Transverse colon (tissue), 4 donors: ENCODE measurements at regions of chr6 and their contacts with region 1.

Region 1: DNA sequence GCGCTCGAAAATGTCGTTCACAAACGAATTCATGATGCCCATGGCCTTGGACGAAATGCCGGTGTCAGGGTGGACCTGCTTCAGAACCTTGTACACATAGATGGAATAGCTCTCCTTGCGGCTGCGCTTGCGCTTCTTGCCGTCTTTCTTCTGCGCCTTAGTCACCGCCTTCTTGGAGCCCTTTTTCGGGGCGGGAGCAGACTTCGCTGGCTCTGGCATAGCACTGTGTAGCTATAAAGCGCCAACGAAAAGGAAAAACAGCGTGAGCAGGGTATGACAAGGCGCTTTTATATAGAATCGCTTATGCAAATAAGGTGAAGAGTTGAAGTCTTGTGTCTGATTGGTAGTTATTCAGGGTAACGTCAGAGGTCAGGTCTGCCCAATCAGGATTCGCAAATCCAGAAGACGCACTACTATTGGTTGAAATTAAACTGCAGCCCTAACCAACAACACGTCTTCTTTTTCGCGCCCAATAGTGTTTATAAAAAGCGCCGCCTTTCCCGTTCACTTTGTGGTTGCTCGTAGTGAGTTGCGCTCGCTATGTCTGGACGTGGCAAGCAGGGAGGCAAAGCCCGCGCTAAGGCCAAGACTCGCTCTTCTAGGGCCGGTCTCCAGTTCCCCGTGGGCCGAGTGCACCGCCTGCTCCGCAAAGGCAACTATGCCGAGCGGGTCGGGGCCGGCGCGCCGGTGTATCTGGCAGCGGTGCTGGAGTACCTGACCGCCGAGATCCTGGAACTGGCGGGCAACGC is 114.8 kb upstream of the PRSS16 start:
- DNase-seq: peak; percentile 94
- H3K4me3 ChIP-seq: peak overlapping the region; percentile 32 to 66 (median 50)
- H3K27ac ChIP-seq: peak overlapping the region; percentile 95 to 98 (median 97)
- H3K4me1 ChIP-seq: peaks cover 0 to 23% (median 17%) of the 10 kb centered on the region in 4 donors
- H3K27me3 ChIP-seq: no peaks in the 10 kb centered on the region
- CTCF ChIP-seq: no peak
- EP300 ChIP-seq: no peak
- POLR2A ChIP-seq: peak; percentile 99

Region 2: DNA sequence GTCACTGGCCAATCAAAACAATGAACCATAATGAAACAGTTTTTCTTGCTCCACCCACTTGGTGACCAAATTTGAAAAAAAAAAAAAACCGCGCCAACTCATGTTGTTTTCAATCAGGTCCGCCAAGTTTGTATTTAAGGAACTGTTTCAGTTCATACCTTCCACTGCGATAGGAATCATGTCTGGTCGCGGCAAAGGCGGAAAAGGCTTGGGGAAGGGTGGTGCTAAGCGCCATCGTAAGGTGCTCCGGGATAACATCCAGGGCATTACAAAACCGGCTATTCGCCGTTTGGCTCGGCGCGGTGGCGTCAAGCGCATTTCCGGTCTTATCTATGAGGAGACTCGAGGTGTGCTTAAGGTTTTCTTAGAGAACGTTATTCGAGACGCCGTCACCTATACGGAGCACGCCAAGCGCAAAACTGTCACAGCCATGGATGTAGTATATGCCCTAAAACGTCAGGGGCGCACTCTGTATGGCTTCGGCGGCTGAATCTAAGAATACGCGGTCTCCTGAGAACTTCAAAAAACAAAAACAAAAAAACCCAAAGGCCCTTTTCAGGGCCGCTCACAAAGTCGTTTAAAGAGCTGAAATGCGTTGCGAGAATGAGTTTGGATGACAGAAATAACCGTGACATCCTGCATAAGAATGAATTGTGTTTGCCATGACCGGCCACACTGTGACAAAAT is 1028.8 kb before region 1 on chr6:
- in situ Hi-C with region 1: loop called in 1 of 4 experiments (anchors 25 kb)
- intact Hi-C with region 1: no loop called
- DNase-seq: peak; percentile 92
- H3K4me3 ChIP-seq: peak overlapping the region; percentile 23 to 53 (median 32)
- H3K27ac ChIP-seq: peak overlapping the region; percentile 91 to 95 (median 93)
- H3K4me1 ChIP-seq: peaks cover 6 to 23% (median 13%) of the 10 kb centered on the region in 4 donors
- H3K27me3 ChIP-seq: no peaks in the 10 kb centered on the region
- CTCF ChIP-seq: peak; percentile 42 to 73 (median 54)
- EP300 ChIP-seq: peak; percentile 49
- POLR2A ChIP-seq: peak; percentile 100

Region 3: GRCh38 chr6:26196846-26197648 is 935.7 kb before region 1 on chr6:
- in situ Hi-C with region 1: loop called in 2 of 4 experiments (anchors 25 kb)
- intact Hi-C with region 1: no loop called
- DNase-seq: peak; percentile 84
- H3K4me3 ChIP-seq: peak overlapping the region; percentile 46 to 70 (median 62)
- H3K27ac ChIP-seq: peak overlapping the region; percentile 97 to 99 (median 98)
- H3K4me1 ChIP-seq: peaks cover 5 to 29% (median 20%) of the 10 kb centered on the region in 4 donors
- H3K27me3 ChIP-seq: no peaks in the 10 kb centered on the region
- CTCF ChIP-seq: no peak
- EP300 ChIP-seq: no peak
- POLR2A ChIP-seq: peak; percentile 91

Region 4: DNA sequence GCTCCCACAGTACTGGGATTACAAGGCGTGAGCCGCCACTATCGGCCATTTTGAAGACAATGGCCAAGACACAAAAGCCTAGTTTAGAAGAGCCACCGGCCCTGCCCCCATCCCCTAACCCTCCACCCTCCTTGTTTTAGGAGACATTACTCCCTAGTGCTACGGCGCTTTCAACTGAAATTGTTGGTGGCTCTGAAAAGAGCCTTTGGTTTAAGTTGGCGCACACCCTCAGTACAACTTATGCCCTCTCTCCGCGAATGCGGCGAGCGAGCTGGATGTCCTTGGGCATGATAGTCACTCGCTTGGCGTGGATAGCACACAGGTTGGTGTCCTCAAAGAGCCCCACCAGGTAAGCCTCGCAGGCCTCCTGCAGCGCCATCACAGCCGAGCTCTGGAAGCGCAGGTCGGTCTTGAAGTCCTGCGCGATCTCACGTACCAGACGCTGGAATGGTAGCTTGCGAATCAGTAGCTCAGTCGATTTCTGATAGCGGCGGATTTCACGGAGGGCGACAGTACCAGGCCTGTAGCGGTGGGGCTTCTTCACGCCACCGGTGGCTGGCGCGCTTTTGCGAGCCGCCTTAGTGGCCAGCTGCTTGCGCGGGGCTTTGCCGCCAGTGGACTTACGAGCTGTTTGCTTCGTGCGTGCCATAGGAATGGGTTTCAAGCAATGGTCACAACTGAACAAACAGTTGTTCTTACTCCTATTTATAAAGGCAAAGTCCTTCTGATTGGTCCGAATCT is 882.6 kb before region 1 on chr6:
- in situ Hi-C with region 1: loop called in 1 of 4 experiments (anchors 25 kb)
- intact Hi-C with region 1: no loop called
- DNase-seq: peak; percentile 84
- H3K4me3 ChIP-seq: peak overlapping the region; percentile 13 to 54 (median 43)
- H3K27ac ChIP-seq: peak overlapping the region; percentile 85 to 93 (median 89)
- H3K4me1 ChIP-seq: peaks cover 3 to 16% (median 8%) of the 10 kb centered on the region in 4 donors
- H3K27me3 ChIP-seq: peaks cover 37% of the 10 kb centered on the region
- CTCF ChIP-seq: peak; percentile 33 to 73 (median 48)
- EP300 ChIP-seq: no peak
- POLR2A ChIP-seq: peak; percentile 90

Region 5: DNA sequence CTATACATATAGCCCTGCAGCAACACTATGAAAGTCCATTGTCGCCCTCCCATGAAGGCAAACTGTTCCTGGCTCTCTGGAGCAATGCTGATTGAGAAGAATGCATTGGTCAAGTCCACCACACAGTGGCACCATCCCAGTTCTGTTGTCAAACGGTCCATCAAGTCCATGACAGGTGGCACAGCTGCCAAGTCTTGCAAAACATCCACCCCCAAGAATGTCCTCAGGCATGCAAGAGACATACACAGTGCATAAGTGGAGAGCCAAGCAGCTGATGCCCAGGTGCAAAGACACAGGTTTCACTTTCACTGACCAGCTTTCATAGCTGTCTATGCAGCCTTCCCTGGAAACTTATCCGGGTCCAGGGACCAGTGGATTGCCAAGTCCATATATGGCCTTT is 273.4 kb after region 1 on chr6:
- in situ Hi-C with region 1: no loop called
- intact Hi-C with region 1: no loop called
- DNase-seq: no peak
- H3K4me3 ChIP-seq: no peak overlapping the region
- H3K27ac ChIP-seq: no peak overlapping the region
- H3K4me1 ChIP-seq: no peaks in the 10 kb centered on the region
- H3K27me3 ChIP-seq: no peaks in the 10 kb centered on the region
- CTCF ChIP-seq: no peak
- EP300 ChIP-seq: no peak
- POLR2A ChIP-seq: no peak

Region 6: GRCh38 chr6:27479319-27480182 is 346.8 kb after region 1 on chr6:
- in situ Hi-C with region 1: no loop called
- intact Hi-C with region 1: loop called (anchors 2 kb)
- DNase-seq: peak; percentile 80
- H3K4me3 ChIP-seq: peak overlapping the region; percentile 62 to 90 (median 82)
- H3K27ac ChIP-seq: peak overlapping the region; percentile 95 to 99 (median 98)
- H3K4me1 ChIP-seq: peaks cover 0 to 18% (median 9%) of the 10 kb centered on the region in 4 donors
- H3K27me3 ChIP-seq: no peaks in the 10 kb centered on the region
- CTCF ChIP-seq: no peak
- EP300 ChIP-seq: no peak
- POLR2A ChIP-seq: no peak

Region 7: DNA sequence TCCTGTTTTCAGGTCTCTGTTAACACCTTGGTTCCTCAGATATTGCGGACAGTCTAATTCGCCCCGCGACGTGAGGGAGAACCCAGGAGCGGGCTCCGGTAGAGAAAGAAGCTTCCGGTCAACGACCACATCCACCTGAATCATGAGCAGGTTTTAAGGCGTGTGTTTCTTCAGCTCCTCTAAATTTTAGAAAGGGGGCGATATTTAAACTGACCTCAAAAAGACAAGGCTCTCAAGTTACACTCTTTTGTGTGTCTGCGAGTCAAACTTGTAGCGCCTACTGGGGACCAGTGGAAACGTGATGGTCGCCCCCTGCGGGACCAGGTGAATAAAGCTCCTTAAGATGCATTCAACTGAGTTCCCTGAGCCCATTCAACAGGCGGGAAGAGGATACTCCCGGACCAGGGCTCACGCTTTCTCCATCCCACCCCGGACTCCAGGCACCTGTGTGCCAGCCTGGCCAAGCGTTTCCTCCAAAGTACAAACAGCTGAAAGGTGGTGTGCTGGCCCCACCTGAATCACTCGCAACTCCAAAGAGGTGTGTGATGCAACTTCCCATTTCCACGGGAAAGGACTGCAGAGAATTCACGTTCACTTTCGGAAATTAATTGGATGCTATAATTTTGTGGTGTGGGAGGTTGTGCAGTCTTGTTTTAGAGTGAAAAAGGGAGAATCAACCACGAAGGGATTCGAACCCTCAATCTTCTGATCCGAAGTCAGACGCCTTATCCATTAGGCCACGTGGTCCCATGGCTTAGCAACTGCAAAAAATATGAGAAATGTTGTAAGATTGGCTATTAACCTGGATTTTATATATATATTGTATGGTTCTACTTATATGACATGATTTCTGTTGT is 1410.0 kb after region 1 on chr6:
- in situ Hi-C with region 1: no loop called
- intact Hi-C with region 1: no loop called
- DNase-seq: peak; percentile 58
- H3K4me3 ChIP-seq: peak overlapping the region in 2 of 4 donors; percentile 19 to 47
- H3K27ac ChIP-seq: no peak overlapping the region
- H3K4me1 ChIP-seq: peaks cover 0 to 11% (median 3%) of the 10 kb centered on the region in 4 donors
- H3K27me3 ChIP-seq: peaks cover 97% of the 10 kb centered on the region
- CTCF ChIP-seq: peak; percentile 11 to 30 (median 24)
- EP300 ChIP-seq: no peak
- POLR2A ChIP-seq: no peak